Testis (tissue), 5 donors: ENCODE measurements at regions of chr18 and their contacts with region 1.

Region 1: DNA sequence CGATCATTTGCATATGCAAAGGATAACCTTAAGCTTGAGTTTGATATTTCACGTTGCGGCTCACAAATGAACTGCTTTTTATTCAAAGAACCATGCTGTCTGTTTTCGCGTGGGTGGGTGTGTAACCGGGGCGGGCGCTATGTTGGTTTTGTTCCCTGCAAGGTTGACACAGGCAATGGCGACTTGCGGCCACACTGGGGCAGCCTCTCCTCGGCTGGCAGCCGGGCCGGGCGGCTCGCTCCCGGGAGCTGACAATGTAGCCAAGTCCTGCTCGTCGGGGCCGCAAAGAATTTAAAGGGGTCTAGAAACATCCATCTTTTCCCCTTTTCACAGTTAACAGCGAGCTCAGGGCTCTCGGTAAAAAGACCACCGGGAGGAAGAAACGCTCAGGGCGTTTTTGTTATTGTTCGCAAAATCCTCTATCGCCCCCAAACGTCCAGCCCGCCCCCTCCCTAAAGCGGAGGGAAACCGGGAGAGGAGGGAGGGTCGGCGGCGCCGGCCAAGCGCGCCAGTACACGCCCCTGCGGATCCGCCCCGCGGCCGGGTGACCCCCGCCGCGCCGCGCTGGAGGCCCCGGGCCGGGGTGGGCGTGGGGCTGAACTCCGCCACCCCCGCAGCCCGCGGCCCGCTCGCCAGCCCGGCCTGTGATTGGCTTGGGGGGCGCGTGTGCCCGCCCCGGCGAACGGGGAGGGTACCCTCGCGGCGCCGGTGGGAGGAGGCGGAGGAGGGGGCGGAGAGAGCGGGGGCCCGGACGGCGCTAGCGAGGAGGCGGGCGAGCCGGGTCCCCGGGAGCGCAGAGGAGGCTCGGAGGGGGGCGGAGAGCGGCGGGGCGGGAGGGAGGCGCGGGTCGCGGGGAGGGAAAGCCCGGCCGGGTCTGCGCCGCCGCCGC is at the start of gene NEDD4L:
- DNase-seq: peak; percentile 87
- H3K4me3 ChIP-seq: peak within 1 kb of the TSS; percentile 71 to 75
- H3K27ac ChIP-seq: peak within 1 kb of the TSS; percentile 56 to 84
- H3K4me1 ChIP-seq: no peaks in the 10 kb centered on the region
- H3K27me3 ChIP-seq: no peaks in the 10 kb centered on the region
- CTCF ChIP-seq: peak; percentile 55 to 82 (median 73)
- POLR2A ChIP-seq: no peak
- total RNA-seq, gene NEDD4L: 42.7 to 43.1 TPM

Region 2: GRCh38 chr18:58392324-58393000 is 348.7 kb after region 1 on chr18:
- intact Hi-C with region 1: no loop called
- DNase-seq: no peak
- H3K4me3 ChIP-seq: no peak overlapping the region
- H3K27ac ChIP-seq: no peak overlapping the region
- H3K4me1 ChIP-seq: no peaks in the 10 kb centered on the region
- H3K27me3 ChIP-seq: no peaks in the 10 kb centered on the region
- CTCF ChIP-seq: no peak
- POLR2A ChIP-seq: no peak

Region 3: DNA sequence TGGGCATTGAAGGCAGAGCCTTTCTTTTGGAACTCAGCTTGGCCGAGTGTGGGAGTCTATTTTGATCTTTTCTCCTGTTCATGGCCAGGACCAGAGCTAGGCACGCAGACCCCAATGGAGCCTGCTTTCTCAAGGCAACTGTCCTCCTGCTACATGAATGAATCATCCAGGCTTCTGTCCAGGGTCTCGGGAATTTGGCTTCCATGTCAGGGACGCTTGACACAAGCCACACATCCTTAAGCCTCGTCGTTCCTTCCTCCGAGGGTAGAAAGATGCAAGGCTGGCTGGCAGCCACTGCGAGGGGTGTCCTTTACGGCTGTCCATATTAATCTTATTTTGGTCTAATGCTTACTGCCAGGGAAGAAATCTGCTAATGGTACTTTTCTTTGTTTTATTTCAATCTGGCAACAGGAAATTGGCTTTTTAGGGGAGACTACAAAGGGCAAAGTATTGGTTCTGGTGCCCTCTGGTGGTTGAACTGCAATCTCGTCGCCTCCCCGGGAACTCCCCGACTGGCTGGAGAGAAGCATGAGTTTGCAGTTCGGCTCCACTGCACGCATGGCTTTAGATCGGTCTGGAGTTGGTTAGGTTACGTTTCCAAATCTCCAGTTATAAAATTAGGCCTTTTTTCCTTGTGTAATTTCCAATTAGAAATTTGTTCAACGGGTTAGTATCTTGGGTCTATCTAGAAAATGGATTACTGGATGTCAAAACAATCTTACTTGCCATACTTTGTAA is 449.9 kb after region 1 on chr18:
- intact Hi-C with region 1: loop called (anchors 10 kb)
- DNase-seq: peak; percentile 85
- H3K4me3 ChIP-seq: no peak overlapping the region
- H3K27ac ChIP-seq: no peak overlapping the region
- H3K4me1 ChIP-seq: peaks cover 26% of the 10 kb centered on the region
- H3K27me3 ChIP-seq: no peaks in the 10 kb centered on the region
- CTCF ChIP-seq: peak; percentile 76 to 81 (median 76)
- POLR2A ChIP-seq: no peak